ENCODE measurements at regions of chr16 and their contacts with region 1.

Region 1: GRCh38 chr16:90077226-90077756 is at the start of gene PRDM7:
- DNase-seq: peak; percentile 95
- H3K4me3 Mint-ChIP-seq: peak within 1 kb of the TSS; percentile 80
- H3K27ac Mint-ChIP-seq: peak within 1 kb of the TSS; percentile 79
- H3K4me1 Mint-ChIP-seq: peaks cover 33% of the 10 kb centered on the region
- H3K27me3 Mint-ChIP-seq: peaks cover 15% of the 10 kb centered on the region
- total RNA-seq, gene PRDM7: not detected in 2 replicates

Region 2: GRCh38 chr16:89972244-89973234 is 104.8 kb before region 1 on chr16:
- intact Hi-C with region 1: loop called (anchors 1 kb)
- DNase-seq: peak; percentile 92
- H3K4me3 Mint-ChIP-seq: peak overlapping the region; percentile 99
- H3K27ac Mint-ChIP-seq: peak overlapping the region; percentile 94
- H3K4me1 Mint-ChIP-seq: peaks cover 29% of the 10 kb centered on the region
- H3K27me3 Mint-ChIP-seq: peaks cover 2% of the 10 kb centered on the region

Region 3: GRCh38 chr16:90022209-90023064 is 54.9 kb before region 1 on chr16:
- intact Hi-C with region 1: loop called (anchors 2 kb)
- DNase-seq: peak; percentile 83
- H3K4me3 Mint-ChIP-seq: peak overlapping the region; percentile 76
- H3K27ac Mint-ChIP-seq: peak overlapping the region; percentile 55
- H3K4me1 Mint-ChIP-seq: peaks cover 17% of the 10 kb centered on the region
- H3K27me3 Mint-ChIP-seq: peaks cover 17% of the 10 kb centered on the region

Region 4: DNA sequence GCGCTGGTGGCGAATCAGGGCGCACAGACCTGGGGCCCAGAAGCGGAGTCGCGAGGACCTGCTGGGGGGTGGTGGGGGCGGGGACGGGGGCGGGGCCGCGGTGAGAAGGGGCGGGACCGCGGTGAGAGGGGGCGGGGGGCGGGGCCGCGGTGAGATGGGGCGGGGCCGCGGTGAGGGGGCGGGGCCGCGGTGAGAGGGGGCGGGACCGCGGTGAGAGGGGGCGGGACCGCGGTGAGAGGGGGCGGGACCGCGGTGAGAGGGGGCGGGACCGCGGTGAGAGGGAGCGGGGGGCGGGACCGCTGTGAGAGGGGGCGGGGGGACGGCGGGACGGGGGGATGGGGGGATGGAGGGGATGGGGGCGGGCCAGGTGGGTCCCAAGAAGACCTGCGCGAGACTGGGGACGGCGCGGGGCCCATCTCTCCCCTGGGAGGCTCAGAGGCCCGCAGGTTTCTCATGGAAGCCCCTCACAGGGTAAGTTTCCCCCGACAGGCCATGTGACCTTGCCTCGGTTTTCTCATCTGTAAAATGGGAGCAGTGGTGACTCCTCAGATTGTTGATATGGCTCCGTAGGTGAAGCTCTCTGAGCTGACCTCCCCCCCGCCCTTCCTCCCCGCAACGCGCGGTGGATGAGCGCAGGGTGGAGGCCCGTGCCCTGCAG is 29.4 kb before region 1 on chr16:
- intact Hi-C with region 1: loop called (anchors 1 kb)
- DNase-seq: no peak
- H3K4me3 Mint-ChIP-seq: no peak overlapping the region
- H3K27ac Mint-ChIP-seq: no peak overlapping the region
- H3K4me1 Mint-ChIP-seq: no peaks in the 10 kb centered on the region
- H3K27me3 Mint-ChIP-seq: peaks cover 8% of the 10 kb centered on the region